ENCODE measurements at regions of chr2 and their contacts with region 1.

Region 1: DNA sequence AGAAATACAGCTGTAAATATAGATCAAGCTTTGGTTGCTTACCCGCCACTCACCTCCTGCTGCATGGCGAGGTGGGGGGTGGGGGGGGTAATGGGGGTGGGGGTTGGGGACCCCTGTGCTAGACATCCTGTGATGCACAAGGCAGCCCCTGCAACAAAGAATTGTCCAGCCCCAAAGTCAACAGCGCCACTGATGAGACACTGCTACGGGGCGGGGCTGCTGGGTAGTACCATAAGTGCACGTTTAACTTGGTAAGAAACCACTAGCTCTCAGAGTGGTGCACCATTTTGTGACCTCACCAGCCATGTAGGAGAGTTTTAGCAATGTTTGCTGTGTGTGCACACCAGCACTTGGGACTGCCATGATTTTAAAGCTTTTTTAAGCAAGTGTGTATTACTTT is 40.3 kb downstream of the SNORC start:
- DNase-seq: no peak
- ATAC-seq: no peak
- H3K4me3 ChIP-seq: no peak overlapping the region
- H3K27ac ChIP-seq: no peak overlapping the region
- H3K4me1 ChIP-seq: no peaks in the 10 kb centered on the region
- H3K27me3 ChIP-seq: no peaks in the 10 kb centered on the region
- CTCF ChIP-seq: no peak
- EP300 ChIP-seq: no peak
- POLR2A ChIP-seq: no peak
- RAD21 ChIP-seq: no peak

Region 2: DNA sequence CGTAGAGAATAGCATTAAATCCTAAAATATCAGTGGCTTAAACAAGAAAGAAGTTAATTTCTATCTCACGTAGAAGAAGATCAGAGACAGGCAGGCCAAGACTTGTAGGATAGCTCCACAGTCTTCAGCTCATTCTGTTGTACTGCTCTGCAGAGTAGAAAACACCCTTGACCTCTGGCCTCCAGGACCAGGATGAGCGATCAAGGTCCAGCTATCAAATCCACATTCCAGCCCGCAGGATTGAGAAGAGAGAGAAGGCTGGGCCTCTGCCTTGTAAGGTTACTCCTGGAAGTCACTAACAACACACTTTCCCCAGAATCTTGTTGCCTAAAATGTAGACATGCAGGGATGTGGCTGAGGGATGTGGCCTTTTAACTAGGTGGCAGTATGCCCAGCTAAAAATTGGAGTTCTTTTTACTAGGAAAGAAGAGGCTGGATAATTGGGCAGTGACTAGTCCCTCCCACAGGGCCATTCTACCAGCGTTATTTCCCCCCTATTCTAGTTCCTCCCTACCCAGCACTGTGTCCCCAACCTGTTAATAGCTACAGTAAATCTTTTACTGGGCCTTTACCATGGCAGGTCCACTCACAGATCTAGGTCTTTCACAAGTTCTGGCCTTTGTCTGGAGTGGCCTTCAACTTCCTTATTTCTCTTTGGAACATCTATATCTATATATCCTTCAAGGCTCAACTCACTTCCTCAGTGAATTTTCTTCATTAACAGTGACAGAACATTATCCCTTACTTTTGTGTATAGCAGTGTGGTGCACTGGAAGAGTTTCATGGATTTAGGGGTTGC is 783.9 kb before region 1 on chr2:
- CTCF ChIA-PET with region 1: no interaction called
- POLR2A ChIA-PET with region 1: no interaction called
- in situ Hi-C with region 1: loop called (anchors 10 kb)
- intact Hi-C with region 1: no loop called
- DNase-seq: no peak
- ATAC-seq: no peak
- H3K4me3 ChIP-seq: no peak overlapping the region
- H3K27ac ChIP-seq: no peak overlapping the region
- H3K4me1 ChIP-seq: no peaks in the 10 kb centered on the region
- H3K27me3 ChIP-seq: no peaks in the 10 kb centered on the region
- CTCF ChIP-seq: no peak
- EP300 ChIP-seq: no peak
- POLR2A ChIP-seq: no peak
- RAD21 ChIP-seq: no peak

Region 3: GRCh38 chr2:233130481-233131020 is 220.2 kb after region 1 on chr2:
- CTCF ChIA-PET with region 1: no interaction called
- POLR2A ChIA-PET with region 1: no interaction called
- in situ Hi-C with region 1: no loop called
- intact Hi-C with region 1: no loop called
- DNase-seq: no peak
- ATAC-seq: no peak
- H3K4me3 ChIP-seq: no peak overlapping the region
- H3K27ac ChIP-seq: no peak overlapping the region
- H3K4me1 ChIP-seq: no peaks in the 10 kb centered on the region; a peak in 1 of 5 replicates
- H3K27me3 ChIP-seq: no peaks in the 10 kb centered on the region; a peak in 1 of 5 replicates
- CTCF ChIP-seq: no peak
- EP300 ChIP-seq: no peak
- POLR2A ChIP-seq: no peak
- RAD21 ChIP-seq: no peak

Measured in K562 (cell line).